Caco-2 (cell line): ENCODE measurements at regions of chr10 and their contacts with region 1.

Region 1: GRCh38 chr10:112307358-112308124 is 24.3 kb downstream of the TECTB start:
- DNase-seq: peak; percentile 76 to 82
- H3K4me3 ChIP-seq: no peak overlapping the region
- H3K4me3 Mint-ChIP-seq: peak overlapping the region; percentile 15
- H3K27ac Mint-ChIP-seq: peak overlapping the region; percentile 50
- H3K4me1 ChIP-seq: peaks cover 38% of the 10 kb centered on the region
- H3K4me1 Mint-ChIP-seq: peaks cover 31% of the 10 kb centered on the region
- H3K27me3 ChIP-seq: no peaks in the 10 kb centered on the region
- H3K27me3 Mint-ChIP-seq: no peaks in the 10 kb centered on the region
- CTCF ChIP-seq: peak; percentile 94 to 95

Region 2: DNA sequence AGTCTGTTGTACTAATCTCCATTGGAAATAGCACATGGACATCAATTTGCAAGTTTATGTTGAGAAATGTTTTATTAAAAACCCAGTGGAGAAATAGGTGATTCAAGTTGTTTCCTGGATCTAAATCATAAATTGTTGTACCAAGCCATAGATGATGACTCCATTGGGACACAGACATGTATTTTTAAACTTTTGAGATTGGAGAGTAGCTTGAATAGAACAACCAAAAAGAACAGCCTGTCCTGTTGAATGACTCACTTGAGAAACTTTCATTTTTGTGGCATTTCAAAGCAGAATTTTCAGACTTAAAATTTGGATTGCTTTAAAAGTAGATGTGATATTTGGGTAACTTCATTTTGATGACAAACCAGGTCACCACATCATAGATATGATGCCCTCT is 321.5 kb before region 1 on chr10:
- CTCF ChIA-PET with region 1: no interaction called
- POLR2A ChIA-PET with region 1: no interaction called
- intact Hi-C with region 1: no loop called
- DNase-seq: no peak
- H3K4me3 ChIP-seq: no peak overlapping the region
- H3K4me3 Mint-ChIP-seq: no peak overlapping the region
- H3K27ac Mint-ChIP-seq: no peak overlapping the region
- H3K4me1 ChIP-seq: no peaks in the 10 kb centered on the region
- H3K4me1 Mint-ChIP-seq: no peaks in the 10 kb centered on the region
- H3K27me3 ChIP-seq: no peaks in the 10 kb centered on the region
- H3K27me3 Mint-ChIP-seq: peaks cover 17% of the 10 kb centered on the region
- CTCF ChIP-seq: no peak

Region 3: GRCh38 chr10:112140110-112140970 is 167.2 kb before region 1 on chr10:
- CTCF ChIA-PET with region 1: interaction called, 23 read pairs
- POLR2A ChIA-PET with region 1: no interaction called
- intact Hi-C with region 1: loop called (anchors 1 kb)
- DNase-seq: peak; percentile 86 to 89
- H3K4me3 ChIP-seq: no peak overlapping the region
- H3K4me3 Mint-ChIP-seq: no peak overlapping the region
- H3K27ac Mint-ChIP-seq: no peak overlapping the region
- H3K4me1 ChIP-seq: no peaks in the 10 kb centered on the region
- H3K4me1 Mint-ChIP-seq: no peaks in the 10 kb centered on the region
- H3K27me3 ChIP-seq: no peaks in the 10 kb centered on the region
- H3K27me3 Mint-ChIP-seq: no peaks in the 10 kb centered on the region
- CTCF ChIP-seq: peak; percentile 88 to 91

Region 4: GRCh38 chr10:112177247-112177646 is 130.3 kb before region 1 on chr10:
- CTCF ChIA-PET with region 1: interaction called, 7 read pairs
- POLR2A ChIA-PET with region 1: no interaction called
- intact Hi-C with region 1: loop called (anchors 1 kb)
- DNase-seq: peak; percentile 32 to 43
- H3K4me3 ChIP-seq: no peak overlapping the region
- H3K4me3 Mint-ChIP-seq: no peak overlapping the region
- H3K27ac Mint-ChIP-seq: no peak overlapping the region
- H3K4me1 ChIP-seq: peaks cover 55% of the 10 kb centered on the region
- H3K4me1 Mint-ChIP-seq: peaks cover 27% of the 10 kb centered on the region
- H3K27me3 ChIP-seq: no peaks in the 10 kb centered on the region
- H3K27me3 Mint-ChIP-seq: no peaks in the 10 kb centered on the region
- CTCF ChIP-seq: no peak

Region 5: DNA sequence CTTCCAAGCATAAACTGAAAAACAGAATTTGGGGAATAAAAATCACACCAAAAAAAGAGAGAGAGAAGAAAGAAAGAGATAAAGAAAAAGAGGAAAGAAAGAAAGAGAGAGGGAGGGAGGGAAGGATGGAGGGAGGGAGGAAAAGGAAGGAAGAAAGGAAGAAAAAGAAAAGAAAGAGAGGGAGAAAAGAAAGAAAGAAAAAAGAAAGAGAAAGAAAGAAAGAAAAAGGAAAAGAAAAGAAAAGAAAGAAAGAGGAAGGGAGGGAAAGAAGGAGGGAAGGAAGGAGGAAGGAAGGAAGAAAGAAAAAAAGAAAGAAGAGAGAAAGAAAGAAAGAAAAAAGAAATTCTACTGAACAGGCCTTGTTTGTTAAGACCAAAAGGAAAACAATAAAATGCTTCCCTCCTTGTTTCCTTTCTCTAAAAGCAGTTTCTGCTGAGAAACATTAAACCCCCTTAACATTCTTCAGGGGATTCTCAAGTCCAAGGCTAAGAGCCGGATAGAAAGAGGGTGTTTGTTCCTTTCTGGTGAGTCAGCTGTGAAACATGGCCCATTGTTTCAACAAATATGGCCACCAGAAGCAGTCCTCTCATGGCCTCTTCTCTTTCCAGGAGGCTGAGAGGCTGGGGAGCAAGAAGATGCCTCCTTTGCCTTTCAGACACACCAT is 77.1 kb before region 1 on chr10:
- CTCF ChIA-PET with region 1: no interaction called
- POLR2A ChIA-PET with region 1: no interaction called
- intact Hi-C with region 1: loop called (anchors 5 kb)
- DNase-seq: no peak
- H3K4me3 ChIP-seq: no peak overlapping the region
- H3K4me3 Mint-ChIP-seq: no peak overlapping the region
- H3K27ac Mint-ChIP-seq: no peak overlapping the region
- H3K4me1 ChIP-seq: peaks cover 10% of the 10 kb centered on the region
- H3K4me1 Mint-ChIP-seq: peaks cover 18% of the 10 kb centered on the region
- H3K27me3 ChIP-seq: no peaks in the 10 kb centered on the region
- H3K27me3 Mint-ChIP-seq: no peaks in the 10 kb centered on the region
- CTCF ChIP-seq: no peak

Region 6: DNA sequence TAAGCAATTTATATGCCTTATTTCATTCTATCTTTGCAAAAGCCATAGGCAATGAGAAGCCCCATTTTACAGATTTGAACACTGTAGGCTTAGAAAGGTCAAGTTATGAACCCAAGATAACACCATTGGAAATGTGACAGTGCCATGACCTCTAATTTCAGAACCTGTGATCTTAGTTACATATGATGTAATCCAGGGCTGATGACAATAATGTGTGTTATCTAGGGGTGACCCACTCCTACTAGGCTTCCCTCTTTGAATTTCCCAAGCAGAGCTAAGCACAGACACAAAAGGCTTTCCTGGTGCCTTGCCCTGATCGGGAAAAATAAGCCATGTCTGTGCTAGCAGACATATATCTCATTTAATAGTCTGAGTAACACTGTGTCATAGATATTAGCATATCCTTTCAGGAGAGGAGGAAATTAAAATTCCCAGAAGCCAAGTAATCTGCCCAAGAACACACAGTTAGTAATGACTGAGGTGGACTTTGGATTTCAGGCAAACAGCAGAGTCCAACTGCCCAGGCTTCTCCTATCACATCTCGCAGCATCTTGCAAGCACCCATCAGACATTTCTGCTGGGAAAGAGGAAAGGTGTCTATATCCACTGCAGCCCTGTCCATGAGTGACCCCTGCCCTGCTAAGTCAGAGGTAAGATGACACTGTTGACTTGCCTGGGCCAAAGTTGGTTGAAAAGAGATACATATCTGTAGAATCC is 27.2 kb before region 1 on chr10:
- CTCF ChIA-PET with region 1: interaction called, 6 read pairs
- POLR2A ChIA-PET with region 1: no interaction called
- intact Hi-C with region 1: loop called (anchors 1 kb)
- DNase-seq: peak; percentile 52 to 73
- H3K4me3 ChIP-seq: no peak overlapping the region
- H3K4me3 Mint-ChIP-seq: no peak overlapping the region
- H3K27ac Mint-ChIP-seq: peak overlapping the region; percentile 55
- H3K4me1 ChIP-seq: peaks cover 52% of the 10 kb centered on the region
- H3K4me1 Mint-ChIP-seq: peaks cover 27% of the 10 kb centered on the region
- H3K27me3 ChIP-seq: no peaks in the 10 kb centered on the region
- H3K27me3 Mint-ChIP-seq: no peaks in the 10 kb centered on the region
- CTCF ChIP-seq: no peak